ENCODE measurements at regions of chr12 and their contacts with region 1.

Region 1: DNA sequence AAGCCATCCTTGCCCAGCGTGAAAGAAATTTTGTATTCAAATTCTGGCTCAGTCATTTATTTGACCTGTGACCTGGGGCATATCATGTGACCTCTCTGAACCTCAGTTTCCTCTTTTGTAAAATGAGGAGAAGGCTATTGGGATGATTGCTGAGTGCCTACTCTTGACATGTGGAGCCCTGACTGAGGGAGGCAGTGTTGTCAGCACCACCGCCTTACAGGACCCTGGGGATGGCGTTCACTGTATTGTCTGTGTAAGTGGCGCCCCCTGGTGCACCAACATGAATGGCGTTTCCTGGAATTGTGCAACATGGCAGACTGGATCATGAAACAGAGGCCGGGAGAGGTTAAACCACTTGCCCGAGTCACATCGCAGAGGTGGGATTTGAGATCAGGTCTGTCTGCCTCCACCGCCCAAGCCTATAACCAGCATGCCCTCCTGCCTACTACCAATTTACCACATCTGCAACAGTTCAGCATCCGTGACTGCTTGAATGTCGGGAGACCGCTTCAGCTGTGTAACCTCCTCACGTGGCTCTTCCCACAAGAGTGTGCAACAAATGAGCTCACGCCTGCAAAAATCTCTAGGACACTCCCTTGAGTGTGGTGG is 20.1 kb upstream of the CCDC63 start:
- DNase-seq: peak; percentile 72 to 89 (median 78)
- ATAC-seq: peak; percentile 98
- H3K4me3 ChIP-seq: no peak overlapping the region
- H3K4me3 Mint-ChIP-seq: no peak overlapping the region
- H3K27ac ChIP-seq: no peak overlapping the region
- H3K27ac Mint-ChIP-seq: no peak overlapping the region
- H3K4me1 ChIP-seq: peaks cover 6% of the 10 kb centered on the region
- H3K4me1 Mint-ChIP-seq: peaks cover 7% of the 10 kb centered on the region
- H3K27me3 ChIP-seq: no peaks in the 10 kb centered on the region
- H3K27me3 Mint-ChIP-seq: peaks cover 10% of the 10 kb centered on the region
- CTCF ChIP-seq: peak; percentile 68

Region 2: DNA sequence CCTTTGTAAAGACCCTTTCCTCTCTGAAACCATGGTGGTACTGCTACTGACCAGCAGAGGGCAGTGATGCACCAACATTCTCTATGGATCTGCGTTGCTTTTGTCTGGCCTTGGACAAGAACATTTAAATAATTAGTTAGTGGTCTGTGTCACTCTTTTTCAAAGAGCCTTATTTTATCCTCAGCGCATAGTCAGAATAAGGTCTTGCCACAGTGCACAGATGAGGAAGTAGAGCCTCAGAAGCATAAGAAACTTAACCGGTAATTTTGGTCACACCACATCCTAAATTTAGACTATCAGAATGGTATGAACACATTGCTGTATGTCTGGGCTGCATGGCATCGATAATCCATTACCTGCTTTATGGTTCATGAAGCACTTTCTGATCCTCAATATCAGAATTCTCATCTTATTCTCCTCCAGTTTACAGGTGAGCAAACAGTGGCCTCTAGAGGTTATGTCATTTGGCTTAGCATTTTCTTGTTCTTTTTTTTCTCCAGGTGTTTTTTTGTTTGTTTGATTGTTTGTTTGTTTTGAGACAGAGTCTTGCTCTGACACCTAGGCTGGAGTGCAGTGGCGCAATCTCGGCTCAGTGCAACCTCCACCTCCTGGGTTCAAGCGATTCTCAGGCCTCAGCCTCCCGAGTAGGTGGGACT is 726.3 kb before region 1 on chr12:
- CTCF ChIA-PET with region 1: no interaction called
- POLR2A ChIA-PET with region 1: no interaction called
- intact Hi-C with region 1: loop called in 1 of 2 experiments (anchors 5 kb)
- DNase-seq: peak; percentile 32 to 84 (median 46)
- ATAC-seq: peak; percentile 80
- H3K4me3 ChIP-seq: no peak overlapping the region
- H3K4me3 Mint-ChIP-seq: no peak overlapping the region
- H3K27ac ChIP-seq: no peak overlapping the region
- H3K27ac Mint-ChIP-seq: no peak overlapping the region
- H3K4me1 ChIP-seq: no peaks in the 10 kb centered on the region
- H3K4me1 Mint-ChIP-seq: peaks cover 13% of the 10 kb centered on the region
- H3K27me3 ChIP-seq: no peaks in the 10 kb centered on the region
- H3K27me3 Mint-ChIP-seq: no peaks in the 10 kb centered on the region
- CTCF ChIP-seq: peak; percentile 99

Region 3: DNA sequence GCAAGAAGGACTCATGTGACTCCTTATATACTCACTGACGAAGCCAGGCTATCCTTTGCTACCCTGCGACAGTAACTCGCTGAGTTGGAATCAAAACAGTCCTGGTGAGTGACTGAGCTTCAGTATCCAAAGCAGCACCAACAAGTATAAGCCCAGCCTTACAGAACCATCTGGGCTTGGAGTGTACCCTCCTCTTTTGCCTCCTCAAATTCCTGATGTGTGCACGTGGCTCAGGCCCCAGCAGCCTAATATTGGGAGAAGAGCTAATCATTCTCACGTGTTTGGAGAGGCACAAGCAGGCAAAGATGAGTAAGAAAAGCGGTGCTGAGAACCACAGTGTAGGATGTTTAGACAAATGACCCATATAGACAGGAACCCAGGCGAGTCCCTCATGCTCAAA is 278.0 kb before region 1 on chr12:
- CTCF ChIA-PET with region 1: no interaction called
- POLR2A ChIA-PET with region 1: no interaction called
- intact Hi-C with region 1: loop called (anchors 1 to 5 kb)
- DNase-seq: no peak
- ATAC-seq: no peak
- H3K4me3 ChIP-seq: no peak overlapping the region
- H3K4me3 Mint-ChIP-seq: no peak overlapping the region
- H3K27ac ChIP-seq: no peak overlapping the region
- H3K27ac Mint-ChIP-seq: no peak overlapping the region
- H3K4me1 ChIP-seq: peaks cover 7% of the 10 kb centered on the region
- H3K4me1 Mint-ChIP-seq: peaks cover 39% of the 10 kb centered on the region
- H3K27me3 ChIP-seq: no peaks in the 10 kb centered on the region
- H3K27me3 Mint-ChIP-seq: no peaks in the 10 kb centered on the region
- CTCF ChIP-seq: no peak

Region 4: GRCh38 chr12:110600254-110600653 is 226.4 kb before region 1 on chr12:
- CTCF ChIA-PET with region 1: no interaction called
- POLR2A ChIA-PET with region 1: interaction called, 3 read pairs
- intact Hi-C with region 1: loop called (anchors 1 to 5 kb)
- DNase-seq: peak in 3 of 14 experiments; percentile 70 to 76 (median 74)
- ATAC-seq: peak; percentile 46
- H3K4me3 ChIP-seq: no peak overlapping the region
- H3K4me3 Mint-ChIP-seq: no peak overlapping the region
- H3K27ac ChIP-seq: no peak overlapping the region
- H3K27ac Mint-ChIP-seq: peak overlapping the region; percentile 0
- H3K4me1 ChIP-seq: peaks cover 5% of the 10 kb centered on the region
- H3K4me1 Mint-ChIP-seq: peaks cover 10% of the 10 kb centered on the region
- H3K27me3 ChIP-seq: no peaks in the 10 kb centered on the region
- H3K27me3 Mint-ChIP-seq: no peaks in the 10 kb centered on the region
- CTCF ChIP-seq: peak; percentile 71

Region 5: DNA sequence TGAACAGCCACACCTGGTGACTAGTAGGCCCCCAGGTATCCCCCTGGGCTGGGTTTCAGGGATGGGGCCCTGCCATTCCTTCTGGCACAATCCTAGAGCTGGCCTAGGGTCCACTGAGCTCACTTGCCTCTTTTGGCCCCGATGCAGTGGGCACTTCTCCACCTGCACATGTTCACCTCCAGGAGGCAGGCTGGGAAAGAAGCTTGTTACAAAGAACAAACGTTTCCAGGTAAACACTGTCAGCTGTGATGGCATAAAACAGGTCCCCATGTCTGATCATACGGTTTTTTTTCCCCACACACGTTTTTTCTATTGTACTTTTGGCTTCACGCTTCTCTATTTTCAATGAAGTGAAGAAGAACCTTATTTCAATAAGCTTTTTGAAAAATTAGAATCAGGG is 121.9 kb before region 1 on chr12:
- CTCF ChIA-PET with region 1: interaction called, 4 read pairs
- POLR2A ChIA-PET with region 1: no interaction called
- intact Hi-C with region 1: loop called (anchors 5 to 10 kb)
- DNase-seq: peak in 3 of 14 experiments; percentile 24 to 49 (median 44)
- ATAC-seq: peak; percentile 62
- H3K4me3 ChIP-seq: no peak overlapping the region
- H3K4me3 Mint-ChIP-seq: no peak overlapping the region
- H3K27ac ChIP-seq: no peak overlapping the region
- H3K27ac Mint-ChIP-seq: no peak overlapping the region
- H3K4me1 ChIP-seq: no peaks in the 10 kb centered on the region
- H3K4me1 Mint-ChIP-seq: peaks cover 5% of the 10 kb centered on the region
- H3K27me3 ChIP-seq: no peaks in the 10 kb centered on the region
- H3K27me3 Mint-ChIP-seq: no peaks in the 10 kb centered on the region
- CTCF ChIP-seq: no peak

Region 6: DNA sequence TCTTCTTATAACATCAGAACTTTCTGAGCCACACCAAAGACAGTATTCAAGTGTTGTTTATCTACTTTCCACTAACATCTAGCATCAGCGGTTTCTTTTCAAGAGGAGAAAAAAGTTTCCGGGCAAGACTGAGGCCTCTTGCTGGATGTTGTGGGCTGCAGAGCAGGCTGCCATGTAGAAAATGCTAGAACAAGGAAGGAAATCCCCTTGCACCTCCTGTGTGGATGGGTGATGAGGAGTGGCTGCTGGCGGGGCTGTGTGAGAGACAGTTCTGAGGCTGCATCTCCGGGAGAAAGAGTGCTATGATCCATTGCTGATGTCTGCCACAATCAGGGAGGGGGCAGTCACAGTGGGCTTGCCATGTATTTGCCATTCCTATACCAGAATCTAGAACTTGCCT is 46.2 kb before region 1 on chr12:
- CTCF ChIA-PET with region 1: no interaction called
- POLR2A ChIA-PET with region 1: no interaction called
- intact Hi-C with region 1: loop called in 1 of 2 experiments (anchors 1 kb)
- DNase-seq: peak; percentile 4 to 76 (median 33)
- ATAC-seq: peak; percentile 88
- H3K4me3 ChIP-seq: no peak overlapping the region
- H3K4me3 Mint-ChIP-seq: peak overlapping the region; percentile 42
- H3K27ac ChIP-seq: peak overlapping the region in 1 of 2 donors; percentile 18
- H3K27ac Mint-ChIP-seq: peak overlapping the region; percentile 77
- H3K4me1 ChIP-seq: peaks cover 43% of the 10 kb centered on the region
- H3K4me1 Mint-ChIP-seq: peaks cover 44% of the 10 kb centered on the region
- H3K27me3 ChIP-seq: no peaks in the 10 kb centered on the region
- H3K27me3 Mint-ChIP-seq: no peaks in the 10 kb centered on the region
- CTCF ChIP-seq: no peak

Region 7: GRCh38 chr12:110869026-110869425 is 42.3 kb after region 1 on chr12:
- CTCF ChIA-PET with region 1: no interaction called
- POLR2A ChIA-PET with region 1: no interaction called
- intact Hi-C with region 1: no loop called
- DNase-seq: peak in 2 of 14 experiments; percentile 22 to 23
- ATAC-seq: no peak
- H3K4me3 ChIP-seq: no peak overlapping the region
- H3K4me3 Mint-ChIP-seq: no peak overlapping the region
- H3K27ac ChIP-seq: no peak overlapping the region
- H3K27ac Mint-ChIP-seq: no peak overlapping the region
- H3K4me1 ChIP-seq: no peaks in the 10 kb centered on the region
- H3K4me1 Mint-ChIP-seq: no peaks in the 10 kb centered on the region
- H3K27me3 ChIP-seq: no peaks in the 10 kb centered on the region
- H3K27me3 Mint-ChIP-seq: peaks cover 4% of the 10 kb centered on the region
- CTCF ChIP-seq: no peak

Measured in CD4-positive, alpha-beta T cell (primary cell).